Heart right ventricle (tissue), 16 donors: ENCODE measurements at regions of chr14 and their contacts with region 1.

Region 1: GRCh38 chr14:102304611-102305509 is at the start of gene MOK:
- DNase-seq: peak; percentile 96 to 98
- ATAC-seq: peak; percentile 98 to 100 (median 100)
- H3K4me3 ChIP-seq: peak within 1 kb of the TSS; percentile 63 to 80 (median 74)
- H3K27ac ChIP-seq: peak within 1 kb of the TSS; percentile 49 to 91 (median 82)
- H3K4me1 ChIP-seq: peaks cover 0 to 21% (median 10%) of the 10 kb centered on the region in 9 donors
- H3K27me3 ChIP-seq: no peaks in the 10 kb centered on the region
- CTCF ChIP-seq: peak in 2 of 9 donors; percentile 16 to 18
- total RNA-seq, gene MOK: 6.6 to 15.5 (median 9.5) TPM

Region 2: DNA sequence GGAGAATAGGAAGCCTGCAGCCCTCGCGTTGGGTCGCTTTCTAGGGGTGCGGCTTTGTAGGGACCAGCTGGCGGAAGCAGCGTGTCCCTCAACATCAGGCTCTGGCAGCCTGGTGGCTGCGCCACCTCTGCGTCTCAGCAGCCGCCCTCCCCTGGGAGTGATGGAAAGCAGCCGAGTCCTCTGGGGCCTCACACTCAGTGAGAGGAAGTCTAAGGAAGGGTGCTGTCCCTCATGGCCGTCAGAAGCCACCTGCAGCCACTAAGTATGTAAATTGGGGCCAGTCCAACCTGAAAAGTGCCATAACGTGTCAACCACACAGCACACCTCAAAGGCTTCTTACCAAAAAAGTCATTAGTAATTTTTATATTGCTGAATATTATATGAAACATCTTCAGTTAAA is 84.8 kb before region 1 on chr14:
- intact Hi-C with region 1: no loop called
- DNase-seq: no peak
- ATAC-seq: no peak
- H3K4me3 ChIP-seq: no peak overlapping the region
- H3K27ac ChIP-seq: no peak overlapping the region
- H3K4me1 ChIP-seq: peaks cover 0 to 43% (median 28%) of the 10 kb centered on the region in 9 donors
- H3K27me3 ChIP-seq: no peaks in the 10 kb centered on the region
- CTCF ChIP-seq: no peak

Region 3: DNA sequence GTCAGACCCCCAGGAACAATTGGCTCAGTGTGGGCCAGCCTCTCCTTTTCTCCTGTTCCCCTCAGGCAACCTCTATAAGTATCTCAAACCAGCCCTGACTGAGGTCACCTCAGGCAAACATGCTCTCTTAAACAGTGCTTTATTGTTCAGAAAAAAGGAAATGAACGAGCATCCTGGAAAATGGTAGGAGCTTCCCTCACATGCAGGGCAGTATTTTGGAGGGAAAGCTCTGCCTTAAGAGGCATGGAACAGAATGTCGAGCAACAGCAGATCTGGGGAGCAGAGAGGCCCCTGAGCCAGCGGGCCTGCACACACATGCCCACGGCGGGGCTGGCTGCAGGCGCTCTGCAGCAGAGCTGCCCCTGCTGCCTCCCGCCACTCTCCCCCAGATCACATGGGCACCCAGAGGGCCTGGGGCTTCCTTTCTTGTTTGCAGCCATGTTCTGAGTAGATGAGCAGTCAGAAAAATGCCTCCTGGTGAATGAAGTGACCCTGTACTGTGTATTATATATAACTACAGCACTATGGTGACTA is 41.9 kb before region 1 on chr14:
- intact Hi-C with region 1: loop called in 1 of 10 experiments (anchors 5 kb)
- DNase-seq: no peak
- ATAC-seq: peak in 6 of 8 donors; percentile 8 to 42 (median 34)
- H3K4me3 ChIP-seq: no peak overlapping the region
- H3K27ac ChIP-seq: peak overlapping the region in 9 of 10 donors; percentile 1 to 91 (median 37)
- H3K4me1 ChIP-seq: peaks cover 0 to 39% (median 29%) of the 10 kb centered on the region in 9 donors
- H3K27me3 ChIP-seq: no peaks in the 10 kb centered on the region
- CTCF ChIP-seq: no peak